Right ventricle myocardium inferior (tissue), 1 donor: ENCODE measurements at regions of chr1 and their contacts with region 1.

Region 1: GRCh38 chr1:193486671-193487229 is 300.3 kb upstream of the B3GALT2 start:
- DNase-seq: no peak
- ATAC-seq: no peak

Region 2: DNA sequence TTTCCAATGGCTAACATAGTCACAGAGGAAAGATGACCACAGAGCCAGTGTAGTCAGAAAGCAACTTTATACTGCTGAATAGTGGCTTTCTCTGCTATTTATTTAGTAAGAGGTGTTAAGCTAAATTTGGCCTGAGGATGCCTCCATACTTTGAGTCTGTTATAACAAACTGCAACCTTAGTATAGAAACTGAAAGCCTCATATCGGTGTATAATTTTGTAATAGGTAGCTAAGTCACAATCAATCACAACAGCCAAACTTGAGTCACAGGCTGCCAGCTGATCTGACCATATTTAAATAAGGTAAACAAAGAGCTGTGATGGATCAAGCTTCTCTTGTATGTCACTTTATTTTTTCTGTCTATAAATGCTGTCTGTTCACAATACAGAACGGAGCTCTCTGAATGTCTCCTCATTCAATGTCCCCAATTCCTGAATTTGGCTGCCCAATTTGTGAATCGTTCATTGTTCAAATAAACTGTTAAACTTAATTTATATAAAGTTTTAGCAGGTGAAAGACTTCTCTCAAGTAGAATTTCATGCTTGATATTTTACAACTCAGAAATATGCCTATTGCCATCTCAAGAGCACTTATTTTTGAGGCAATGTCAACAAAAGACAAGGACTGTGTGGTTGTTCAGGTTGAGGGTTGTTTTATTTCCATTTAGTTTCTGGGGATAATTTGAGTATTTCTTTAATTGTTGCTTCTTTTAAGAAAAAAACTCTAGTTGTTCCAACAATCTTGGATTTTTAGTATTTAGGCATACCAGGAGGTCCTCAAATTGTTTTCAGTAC is 39.4 kb after region 1 on chr1:
- intact Hi-C with region 1: no loop called
- DNase-seq: no peak
- ATAC-seq: no peak

Region 3: GRCh38 chr1:193697105-193697762 is 210.5 kb after region 1 on chr1:
- intact Hi-C with region 1: loop called (anchors 10 kb)
- DNase-seq: no peak
- ATAC-seq: no peak